Activated naive CD4-positive, alpha-beta T cell treated with anti-CD3 and anti-CD28 coated beads, Interleukin-2, amount 10 ng/mL, durations not matched to agents 7 days and 5 days (primary cell): ENCODE measurements at regions of chr19 and their contacts with region 1.

Region 1: DNA sequence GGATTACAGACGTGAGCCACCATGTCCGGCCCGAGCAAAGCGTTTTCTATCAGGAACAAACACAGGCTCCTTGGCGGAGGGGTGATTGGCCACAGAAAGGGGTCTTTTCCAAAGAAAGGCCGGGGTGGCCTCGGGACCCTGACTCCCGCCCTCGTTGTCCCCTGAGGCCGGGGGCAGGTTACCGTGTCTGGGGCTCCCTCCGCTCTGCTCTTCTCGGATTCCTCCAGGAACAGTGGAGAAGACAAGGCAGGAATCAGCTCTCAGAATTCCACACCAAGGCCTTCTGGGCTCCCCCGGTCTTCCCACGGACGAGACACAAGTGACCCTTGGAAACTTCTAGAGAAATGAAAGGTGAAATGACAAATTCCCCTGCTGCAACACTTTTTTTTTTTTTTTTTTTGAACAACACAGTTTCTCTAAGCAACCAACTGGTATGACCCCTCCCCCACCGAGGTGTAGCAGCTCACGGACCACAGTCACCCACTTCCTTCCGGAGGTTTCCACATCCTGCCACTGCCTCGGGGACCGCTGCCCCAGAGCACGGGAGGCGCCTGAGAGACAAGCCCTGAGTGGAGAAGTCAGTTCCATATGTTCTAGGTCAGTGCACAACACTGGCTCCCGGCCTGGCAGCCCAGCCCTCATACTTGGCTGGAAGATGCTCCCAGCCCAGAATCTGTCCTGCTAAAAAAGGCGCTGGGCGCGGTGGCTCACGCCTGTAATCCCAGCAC is 11.0 kb downstream of the MOB3A start:
- DNase-seq: peak; percentile 97
- H3K4me3 Mint-ChIP-seq: peak overlapping the region; percentile 96
- H3K27ac Mint-ChIP-seq: peak overlapping the region; percentile 97
- H3K4me1 Mint-ChIP-seq: peaks cover 72% of the 10 kb centered on the region
- H3K27me3 Mint-ChIP-seq: peaks cover 6% of the 10 kb centered on the region

Region 2: DNA sequence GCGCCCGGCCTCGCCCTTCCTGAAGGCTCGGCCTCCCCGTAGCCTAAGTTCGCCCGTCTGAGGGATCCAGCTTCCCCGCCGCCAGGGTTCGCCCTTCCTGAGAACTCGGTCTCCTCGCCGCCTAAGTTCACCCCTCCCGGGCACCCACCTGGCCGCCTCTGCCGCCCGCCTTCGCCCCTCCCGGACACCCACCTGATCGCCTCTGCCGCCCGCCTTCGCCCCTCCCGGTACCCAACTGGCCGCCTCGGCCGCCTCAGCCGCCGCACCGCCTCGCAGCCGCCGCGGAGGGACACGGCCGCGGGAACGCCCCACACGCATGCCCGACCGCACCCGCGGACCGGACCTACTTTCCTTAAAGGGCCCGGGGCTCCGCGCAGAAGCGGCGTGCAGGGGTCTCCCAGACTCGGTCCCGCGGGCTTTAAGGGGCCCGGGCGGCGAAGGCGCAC is 10.9 kb after region 1 on chr19 and contains the start of gene MOB3A:
- CTCF ChIA-PET with region 1: interaction called, 11 read pairs
- DNase-seq: peak; percentile 88
- H3K4me3 Mint-ChIP-seq: peak within 1 kb of the TSS; percentile 99
- H3K27ac Mint-ChIP-seq: peak within 1 kb of the TSS; percentile 93
- H3K4me1 Mint-ChIP-seq: peaks cover 37% of the 10 kb centered on the region
- H3K27me3 Mint-ChIP-seq: peaks cover 4% of the 10 kb centered on the region

Region 3: DNA sequence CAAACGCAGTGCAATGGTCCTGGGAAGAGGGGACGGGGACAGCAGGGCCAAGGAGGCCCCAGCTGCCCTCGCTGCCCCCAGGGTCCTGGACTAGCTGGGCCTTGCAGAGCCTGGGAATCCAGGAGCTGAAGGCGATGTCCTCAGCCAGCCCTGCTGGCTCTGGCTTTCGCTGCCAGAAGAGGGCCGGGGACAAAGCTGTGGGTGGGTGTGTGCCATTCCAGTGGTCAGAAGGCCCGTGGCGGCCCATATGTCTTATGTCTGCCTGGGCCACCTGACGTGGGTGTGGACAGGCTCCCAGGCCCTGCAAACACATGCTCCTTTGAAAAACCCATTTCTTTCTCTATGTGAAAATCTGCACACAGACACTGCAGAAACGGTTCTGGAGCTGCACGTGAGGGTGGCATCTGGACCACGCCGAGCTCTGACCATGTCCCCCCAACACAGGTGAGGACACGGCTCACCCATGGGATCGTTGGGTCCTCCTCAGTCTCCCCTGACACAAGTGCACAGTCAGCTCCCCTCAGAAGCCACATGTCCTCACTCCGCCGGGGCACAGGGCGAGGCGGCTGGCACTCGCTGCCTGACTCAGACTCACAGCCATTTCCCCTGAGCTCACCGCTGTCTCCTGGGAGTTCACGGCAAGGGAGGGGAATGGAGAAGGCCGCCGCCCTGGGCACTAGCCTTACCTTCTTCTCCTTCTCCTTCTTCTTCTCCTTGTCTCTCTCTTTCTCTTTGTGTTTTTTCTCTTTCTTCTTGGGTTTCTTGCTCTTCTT is 28.5 kb after region 1 on chr19:
- CTCF ChIA-PET with region 1: no interaction called
- DNase-seq: no peak
- H3K4me3 Mint-ChIP-seq: no peak overlapping the region
- H3K27ac Mint-ChIP-seq: peak overlapping the region; percentile 4
- H3K4me1 Mint-ChIP-seq: no peaks in the 10 kb centered on the region
- H3K27me3 Mint-ChIP-seq: no peaks in the 10 kb centered on the region